Activated CD4-positive, alpha-beta memory T cell treated with anti-CD3 and anti-CD28 coated beads, Interleukin-2, amount 10 ng/mL, durations not matched to agents 7 days and 5 days (primary cell): ENCODE measurements at regions of chr4 and their contacts with region 1.

Region 1: DNA sequence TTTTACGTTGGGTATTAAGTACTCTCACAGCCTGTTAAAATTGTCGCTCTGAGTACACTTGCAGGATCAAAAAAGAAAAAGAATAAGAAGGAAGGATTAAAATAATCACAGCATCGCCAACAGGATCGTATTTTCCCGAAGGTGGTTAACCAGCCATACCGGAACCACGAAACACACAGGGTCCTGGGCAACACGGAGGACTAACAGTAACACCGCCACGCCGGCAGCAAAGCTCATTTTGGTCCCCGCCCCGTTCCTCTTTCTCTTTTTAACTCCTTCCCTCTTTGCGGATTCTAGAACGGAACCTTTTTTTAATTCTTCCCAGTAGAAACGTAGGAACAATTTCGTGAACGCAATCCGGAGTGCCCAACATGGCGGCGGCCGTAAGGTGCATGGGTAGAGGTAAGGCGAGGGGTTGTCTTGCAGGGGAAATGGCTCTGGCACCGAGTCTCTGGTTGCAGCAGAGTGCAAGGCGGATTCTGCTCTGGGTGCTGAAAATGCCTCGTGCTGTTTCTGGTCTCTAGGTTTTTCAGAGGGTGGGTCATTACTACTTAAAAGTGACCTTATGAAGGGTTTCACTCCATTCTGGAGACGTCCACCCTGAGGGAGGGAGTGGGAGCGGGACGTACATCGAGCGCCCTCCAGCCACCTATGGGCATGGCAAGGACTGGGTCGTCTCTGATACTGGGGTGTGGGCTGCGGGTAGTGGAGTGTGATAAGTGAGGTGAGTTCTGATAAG is at the start of gene MRPL1:
- DNase-seq: peak; percentile 90
- H3K4me3 Mint-ChIP-seq: peak within 1 kb of the TSS; percentile 96
- H3K27ac Mint-ChIP-seq: peak within 1 kb of the TSS; percentile 98
- H3K4me1 Mint-ChIP-seq: peaks cover 54% of the 10 kb centered on the region
- H3K27me3 Mint-ChIP-seq: peaks cover 1% of the 10 kb centered on the region
- total RNA-seq, gene MRPL1: 19.7 to 25.4 TPM

Region 2: DNA sequence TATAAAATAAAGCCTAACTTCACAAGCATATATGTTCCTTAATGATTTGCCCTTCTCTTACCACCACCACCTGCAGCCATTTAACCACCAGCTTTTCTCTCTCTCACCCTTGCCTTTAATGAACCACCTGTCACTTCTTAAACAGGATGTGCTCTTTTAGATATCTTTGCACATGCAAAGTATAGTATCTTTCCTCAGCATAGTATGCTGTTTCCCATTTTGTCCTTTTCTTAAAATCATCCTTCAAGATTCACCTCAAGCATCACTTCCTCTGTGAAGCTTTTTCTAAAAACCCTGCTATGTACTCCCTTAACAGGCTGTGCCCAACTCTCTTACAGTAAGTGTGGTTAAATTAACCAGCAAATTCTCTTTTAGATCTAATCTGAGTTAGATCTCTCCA is 35.3 kb before region 1 on chr4:
- CTCF ChIA-PET with region 1: interaction called, 3 read pairs
- POLR2A ChIA-PET with region 1: interaction called, 611 read pairs
- DNase-seq: no peak
- H3K4me3 Mint-ChIP-seq: no peak overlapping the region
- H3K27ac Mint-ChIP-seq: peak overlapping the region; percentile 10
- H3K4me1 Mint-ChIP-seq: peaks cover 18% of the 10 kb centered on the region
- H3K27me3 Mint-ChIP-seq: no peaks in the 10 kb centered on the region